ENCODE measurements at regions of chr9 and their contacts with region 1.

Region 1: GRCh38 chr9:114930056-114930812 is at the start of gene TNFSF8:
- DNase-seq: peak; percentile 22 to 89 (median 82)
- ATAC-seq: peak; percentile 93
- H3K4me3 ChIP-seq: peak within 1 kb of the TSS; percentile 87
- H3K4me3 Mint-ChIP-seq: peak within 1 kb of the TSS; percentile 78 to 100 (median 99)
- H3K27ac ChIP-seq: peak within 1 kb of the TSS; percentile 79
- H3K27ac Mint-ChIP-seq: peak within 1 kb of the TSS; percentile 93 to 100 (median 99)
- H3K4me1 ChIP-seq: peaks cover 21 to 27% of the 10 kb centered on the region in 2 donors
- H3K4me1 Mint-ChIP-seq: peaks cover 34 to 62% (median 51%) of the 10 kb centered on the region in 7 donors
- H3K27me3 ChIP-seq: no peaks in the 10 kb centered on the region
- H3K27me3 Mint-ChIP-seq: peaks cover 0 to 4% (median 0%) of the 10 kb centered on the region in 5 donors
- total RNA-seq, gene TNFSF8: 19.3 to 129 (median 31.5) TPM

Region 2: GRCh38 chr9:114505187-114506081 is 424.8 kb before region 1 on chr9 and contains the start of gene WHRN:
- CTCF ChIA-PET with region 1: no interaction called
- POLR2A ChIA-PET with region 1: no interaction called
- intact Hi-C with region 1: loop called in 1 of 2 experiments (anchors 5 kb)
- DNase-seq: peak; percentile 80 to 94 (median 89)
- ATAC-seq: peak; percentile 95
- H3K4me3 ChIP-seq: peak within 1 kb of the TSS; percentile 59
- H3K4me3 Mint-ChIP-seq: peak within 1 kb of the TSS; percentile 83 to 90 (median 88)
- H3K27ac ChIP-seq: peak within 1 kb of the TSS; percentile 57
- H3K27ac Mint-ChIP-seq: peak within 1 kb of the TSS; percentile 55 to 94 (median 87)
- H3K4me1 ChIP-seq: peaks cover 14 to 29% of the 10 kb centered on the region in 2 donors
- H3K4me1 Mint-ChIP-seq: peaks cover 5 to 26% (median 22%) of the 10 kb centered on the region in 7 donors
- H3K27me3 ChIP-seq: no peaks in the 10 kb centered on the region
- H3K27me3 Mint-ChIP-seq: peaks cover 0 to 86% (median 33%) of the 10 kb centered on the region in 5 donors
- total RNA-seq, gene WHRN: 1.1 to 24.0 (median 3.0) TPM

Region 3: GRCh38 chr9:114681594-114682332 is 248.5 kb before region 1 on chr9 and contains the start of gene TEX48:
- CTCF ChIA-PET with region 1: interaction called, 7 read pairs
- POLR2A ChIA-PET with region 1: no interaction called
- intact Hi-C with region 1: loop called in 1 of 2 experiments (anchors 1 kb)
- DNase-seq: peak; percentile 29 to 74 (median 62)
- ATAC-seq: peak; percentile 95
- H3K4me3 ChIP-seq: no peak within 1 kb of the TSS
- H3K4me3 Mint-ChIP-seq: peak within 1 kb of the TSS in 1 of 10 donors; percentile 56
- H3K27ac ChIP-seq: no peak within 1 kb of the TSS
- H3K27ac Mint-ChIP-seq: peak within 1 kb of the TSS in 1 of 9 donors; percentile 95
- H3K4me1 ChIP-seq: peaks cover 5 to 11% of the 10 kb centered on the region in 2 donors
- H3K4me1 Mint-ChIP-seq: peaks cover 0 to 58% (median 7%) of the 10 kb centered on the region in 7 donors
- H3K27me3 ChIP-seq: peaks cover 0 to 4% of the 10 kb centered on the region in 2 donors
- H3K27me3 Mint-ChIP-seq: peaks cover 0 to 20% (median 14%) of the 10 kb centered on the region in 5 donors
- total RNA-seq, gene TEX48: 0.85 TPM in 1 of 5 experiments, not detected in the others

Region 4: DNA sequence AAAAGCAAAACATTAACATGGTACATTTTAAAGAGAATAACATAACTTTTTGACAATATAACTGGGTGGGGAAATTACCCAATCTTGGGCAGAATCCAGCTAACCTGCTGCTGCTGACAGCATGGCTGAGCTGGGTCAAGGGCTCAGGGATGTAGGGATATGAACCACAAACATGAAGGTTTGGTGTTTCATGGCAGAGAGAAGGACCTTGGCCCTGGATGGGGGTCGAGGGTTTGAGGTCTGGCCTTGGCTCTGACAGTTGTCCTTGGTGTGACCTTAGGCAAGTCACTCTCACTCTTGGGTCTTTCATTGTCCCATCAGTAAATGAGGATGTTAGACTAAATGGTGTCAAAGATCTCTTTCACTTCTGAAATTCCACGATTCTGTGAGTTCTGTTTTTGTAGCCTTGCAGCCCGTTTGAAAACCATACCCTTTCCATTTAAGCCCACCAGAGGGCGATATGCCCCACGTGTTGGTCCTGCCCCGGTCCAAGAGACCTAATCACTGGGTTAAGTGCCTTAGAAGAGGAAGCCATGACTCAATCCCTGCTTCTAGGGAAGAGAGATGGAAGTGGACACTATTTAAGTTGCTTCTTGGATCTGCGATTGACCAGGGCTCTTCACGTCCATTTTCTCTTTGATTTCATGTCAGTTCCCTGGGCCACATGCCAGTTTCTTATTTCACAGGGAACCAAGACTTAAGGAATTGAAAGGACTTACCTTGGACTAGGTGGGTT is 191.5 kb before region 1 on chr9:
- CTCF ChIA-PET with region 1: interaction called, 7 read pairs
- POLR2A ChIA-PET with region 1: no interaction called
- intact Hi-C with region 1: loop called (anchors 1 to 2 kb)
- DNase-seq: peak; percentile 41 to 81 (median 70)
- ATAC-seq: peak; percentile 97
- H3K4me3 ChIP-seq: no peak overlapping the region
- H3K4me3 Mint-ChIP-seq: peak overlapping the region in 4 of 10 donors; percentile 39 to 77 (median 52)
- H3K27ac ChIP-seq: no peak overlapping the region
- H3K27ac Mint-ChIP-seq: peak overlapping the region in 8 of 9 donors; percentile 26 to 88 (median 74)
- H3K4me1 ChIP-seq: peaks cover 30 to 34% of the 10 kb centered on the region in 2 donors
- H3K4me1 Mint-ChIP-seq: peaks cover 14 to 70% (median 33%) of the 10 kb centered on the region in 7 donors
- H3K27me3 ChIP-seq: no peaks in the 10 kb centered on the region
- H3K27me3 Mint-ChIP-seq: peaks cover 0 to 2% (median 0%) of the 10 kb centered on the region in 5 donors

Region 5: GRCh38 chr9:114914139-114914538 is 16.1 kb before region 1 on chr9:
- CTCF ChIA-PET with region 1: interaction called, 18 read pairs
- POLR2A ChIA-PET with region 1: interaction called, 12 read pairs
- intact Hi-C with region 1: loop called in 1 of 2 experiments (anchors 2 kb)
- DNase-seq: no peak
- ATAC-seq: no peak
- H3K4me3 ChIP-seq: no peak overlapping the region
- H3K4me3 Mint-ChIP-seq: peak overlapping the region in 2 of 10 donors; percentile 3 to 10
- H3K27ac ChIP-seq: no peak overlapping the region
- H3K27ac Mint-ChIP-seq: peak overlapping the region in 5 of 9 donors; percentile 42 to 69 (median 65)
- H3K4me1 ChIP-seq: peaks cover 22 to 27% of the 10 kb centered on the region in 2 donors
- H3K4me1 Mint-ChIP-seq: peaks cover 29 to 100% (median 93%) of the 10 kb centered on the region in 7 donors
- H3K27me3 ChIP-seq: no peaks in the 10 kb centered on the region
- H3K27me3 Mint-ChIP-seq: no peaks in the 10 kb centered on the region

Region 6: DNA sequence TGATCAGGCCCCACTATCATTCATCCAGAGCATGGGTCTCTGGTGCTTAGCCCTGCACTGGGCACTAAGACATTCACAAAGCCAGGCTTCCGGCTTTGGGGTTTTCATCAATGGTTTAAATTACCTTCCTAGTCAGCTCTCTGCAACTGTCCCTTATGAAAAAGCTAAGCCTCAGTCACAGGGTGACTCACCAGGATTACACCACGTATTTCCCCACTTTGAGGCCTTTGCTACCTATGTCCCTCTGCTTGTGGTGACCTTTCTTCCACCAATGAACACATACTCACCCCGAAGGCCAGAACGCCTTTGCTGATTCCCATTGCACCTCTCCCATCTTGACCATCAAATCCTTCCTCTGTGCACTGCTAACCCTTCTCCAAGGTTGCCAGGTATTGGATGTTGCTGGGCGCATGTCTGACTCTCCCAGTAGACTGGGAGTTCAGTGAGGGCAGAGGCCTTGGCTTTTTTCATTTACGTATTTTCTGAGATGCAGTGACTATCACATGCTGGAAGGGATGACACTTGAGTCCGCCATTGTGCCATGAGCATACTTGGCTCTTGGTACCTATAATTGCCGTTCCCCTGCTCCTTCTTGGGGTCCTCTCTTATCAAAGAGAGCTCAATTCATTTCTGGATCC is 58.8 kb after region 1 on chr9:
- CTCF ChIA-PET with region 1: no interaction called
- POLR2A ChIA-PET with region 1: interaction called, 5 read pairs
- intact Hi-C with region 1: loop called (anchors 1 kb)
- DNase-seq: peak in 1 of 9 donors; percentile 53
- ATAC-seq: peak; percentile 62
- H3K4me3 ChIP-seq: no peak overlapping the region
- H3K4me3 Mint-ChIP-seq: peak overlapping the region in 8 of 10 donors; percentile 53 to 78 (median 68)
- H3K27ac ChIP-seq: no peak overlapping the region
- H3K27ac Mint-ChIP-seq: peak overlapping the region; percentile 55 to 91 (median 83)
- H3K4me1 ChIP-seq: peaks cover 5 to 24% of the 10 kb centered on the region in 2 donors
- H3K4me1 Mint-ChIP-seq: peaks cover 20 to 63% (median 35%) of the 10 kb centered on the region in 7 donors
- H3K27me3 ChIP-seq: no peaks in the 10 kb centered on the region
- H3K27me3 Mint-ChIP-seq: no peaks in the 10 kb centered on the region

Region 7: DNA sequence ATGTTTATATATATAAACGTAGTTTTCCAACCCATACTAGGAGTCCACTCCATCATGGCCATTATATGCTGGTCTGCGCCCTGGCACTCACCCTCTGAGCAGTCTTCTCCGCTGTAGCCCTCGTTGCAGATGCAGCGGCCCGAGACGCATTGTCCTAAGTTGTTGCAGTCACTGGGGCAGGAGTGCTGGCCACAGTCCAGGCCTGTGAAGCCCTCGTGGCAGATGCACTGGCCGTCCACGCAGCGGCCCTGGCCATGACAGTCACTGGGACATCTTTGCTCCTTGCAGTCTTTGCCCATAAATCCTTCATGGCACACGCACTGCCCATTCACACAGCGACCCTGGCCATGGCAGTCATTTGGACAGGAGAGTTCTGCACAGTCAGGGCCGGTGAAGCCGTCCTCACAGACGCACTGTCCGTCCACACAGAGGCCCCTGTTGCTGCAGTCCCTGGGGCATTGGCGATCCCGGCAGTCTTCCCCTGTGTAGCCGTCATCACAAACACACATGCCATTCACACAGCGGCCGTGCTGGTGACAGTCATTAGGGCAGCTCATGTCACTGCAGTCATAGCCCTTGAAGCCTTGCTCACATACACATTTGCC is 155.6 kb after region 1 on chr9:
- CTCF ChIA-PET with region 1: no interaction called
- POLR2A ChIA-PET with region 1: no interaction called
- intact Hi-C with region 1: no loop called
- DNase-seq: no peak
- ATAC-seq: no peak
- H3K4me3 ChIP-seq: no peak overlapping the region
- H3K4me3 Mint-ChIP-seq: no peak overlapping the region
- H3K27ac ChIP-seq: no peak overlapping the region
- H3K27ac Mint-ChIP-seq: no peak overlapping the region
- H3K4me1 ChIP-seq: no peaks in the 10 kb centered on the region
- H3K4me1 Mint-ChIP-seq: no peaks in the 10 kb centered on the region
- H3K27me3 ChIP-seq: no peaks in the 10 kb centered on the region
- H3K27me3 Mint-ChIP-seq: peaks cover 0 to 18% (median 6%) of the 10 kb centered on the region in 5 donors

Measured in naive thymus-derived CD4-positive, alpha-beta T cell (primary cell).